ENCODE measurements at regions of chr11 and their contacts with region 1.

Region 1: DNA sequence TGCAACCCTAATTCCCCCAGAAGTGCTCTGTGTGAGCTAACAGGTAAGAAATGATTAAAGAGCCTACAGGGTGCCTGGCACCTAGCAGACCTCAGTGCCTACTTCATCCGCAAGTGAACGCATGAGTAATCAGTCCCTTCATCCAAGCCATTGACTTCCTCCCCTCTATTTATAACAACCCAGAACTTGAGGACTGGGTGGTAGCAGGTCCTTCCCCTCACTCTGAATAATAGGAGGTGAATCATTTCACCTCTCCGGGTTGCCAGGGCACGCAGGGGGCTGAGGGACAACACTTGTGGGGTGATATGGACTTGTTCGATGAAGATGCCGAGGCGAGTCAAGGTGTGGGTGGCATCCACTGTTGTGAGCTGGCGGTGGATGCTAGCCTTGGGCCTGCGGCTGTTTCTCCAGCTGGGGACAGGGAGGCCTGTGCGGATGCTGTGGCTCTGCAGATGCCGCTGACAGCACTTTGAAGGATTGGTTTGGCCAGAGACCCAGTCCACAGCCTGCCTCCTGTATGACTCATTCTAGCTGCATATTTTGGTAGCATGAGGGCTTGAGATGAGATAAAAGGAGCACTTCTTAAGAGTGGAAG is 11.7 kb upstream of the SORL1-AS1 start:
- DNase-seq: peak; percentile 91
- H3K4me3 Mint-ChIP-seq: peak overlapping the region; percentile 70
- H3K27ac Mint-ChIP-seq: peak overlapping the region; percentile 99
- H3K4me1 Mint-ChIP-seq: peaks cover 94% of the 10 kb centered on the region
- H3K27me3 Mint-ChIP-seq: no peaks in the 10 kb centered on the region

Region 2: GRCh38 chr11:120564573-120565311 is 899.7 kb before region 1 on chr11:
- intact Hi-C with region 1: no loop called
- DNase-seq: peak; percentile 62
- H3K4me3 Mint-ChIP-seq: no peak overlapping the region
- H3K27ac Mint-ChIP-seq: peak overlapping the region; percentile 2
- H3K4me1 Mint-ChIP-seq: peaks cover 3% of the 10 kb centered on the region
- H3K27me3 Mint-ChIP-seq: peaks cover 45% of the 10 kb centered on the region

Region 3: DNA sequence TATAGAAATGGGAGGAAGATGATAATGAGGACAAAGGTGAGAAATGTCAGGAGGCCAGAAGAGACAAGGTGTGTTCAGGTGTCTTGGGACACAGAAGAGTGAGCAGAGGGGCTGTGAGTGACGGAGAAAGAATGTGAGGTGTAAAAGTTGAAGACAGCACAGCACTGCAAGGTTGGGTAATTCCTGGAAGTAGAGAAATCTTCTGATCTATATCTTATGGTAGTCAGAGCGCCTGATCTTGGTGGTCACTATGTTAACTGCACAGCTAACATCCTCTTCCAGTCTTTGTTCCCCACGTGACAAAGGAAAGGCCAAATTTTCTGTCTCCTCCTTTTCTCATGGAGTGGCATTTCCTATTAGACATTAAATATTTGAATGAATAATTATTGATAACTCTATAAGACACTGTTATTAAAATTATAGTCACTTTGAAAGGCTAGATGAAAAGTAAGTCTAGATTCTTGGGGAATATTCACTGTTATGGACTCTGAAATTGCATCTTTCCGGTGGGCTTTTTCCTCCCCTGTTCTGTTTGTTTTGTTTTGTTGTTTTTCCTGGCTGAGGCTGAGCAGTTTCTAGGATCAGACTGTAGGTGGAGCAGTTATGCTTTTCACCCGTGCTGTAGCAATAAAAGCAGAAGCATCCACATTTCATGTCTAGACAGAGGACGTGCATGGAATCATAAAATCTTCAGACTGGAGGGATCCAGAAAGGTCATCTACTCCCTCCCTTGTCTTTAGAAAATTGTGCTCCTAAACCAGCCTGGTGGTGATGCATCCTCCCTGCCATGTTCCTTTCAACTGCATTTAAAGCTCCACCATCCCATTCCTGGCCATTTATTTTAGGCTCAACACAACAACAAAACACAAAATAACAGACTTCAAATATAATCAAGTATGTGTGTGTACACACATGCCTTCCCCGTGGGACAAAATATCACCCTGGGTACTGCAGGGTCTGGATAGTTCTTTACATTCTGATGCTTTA is 145.3 kb before region 1 on chr11:
- intact Hi-C with region 1: loop called (anchors 5 kb)
- DNase-seq: peak; percentile 80
- H3K4me3 Mint-ChIP-seq: peak overlapping the region; percentile 0
- H3K27ac Mint-ChIP-seq: no peak overlapping the region
- H3K4me1 Mint-ChIP-seq: peaks cover 20% of the 10 kb centered on the region
- H3K27me3 Mint-ChIP-seq: no peaks in the 10 kb centered on the region

Region 4: DNA sequence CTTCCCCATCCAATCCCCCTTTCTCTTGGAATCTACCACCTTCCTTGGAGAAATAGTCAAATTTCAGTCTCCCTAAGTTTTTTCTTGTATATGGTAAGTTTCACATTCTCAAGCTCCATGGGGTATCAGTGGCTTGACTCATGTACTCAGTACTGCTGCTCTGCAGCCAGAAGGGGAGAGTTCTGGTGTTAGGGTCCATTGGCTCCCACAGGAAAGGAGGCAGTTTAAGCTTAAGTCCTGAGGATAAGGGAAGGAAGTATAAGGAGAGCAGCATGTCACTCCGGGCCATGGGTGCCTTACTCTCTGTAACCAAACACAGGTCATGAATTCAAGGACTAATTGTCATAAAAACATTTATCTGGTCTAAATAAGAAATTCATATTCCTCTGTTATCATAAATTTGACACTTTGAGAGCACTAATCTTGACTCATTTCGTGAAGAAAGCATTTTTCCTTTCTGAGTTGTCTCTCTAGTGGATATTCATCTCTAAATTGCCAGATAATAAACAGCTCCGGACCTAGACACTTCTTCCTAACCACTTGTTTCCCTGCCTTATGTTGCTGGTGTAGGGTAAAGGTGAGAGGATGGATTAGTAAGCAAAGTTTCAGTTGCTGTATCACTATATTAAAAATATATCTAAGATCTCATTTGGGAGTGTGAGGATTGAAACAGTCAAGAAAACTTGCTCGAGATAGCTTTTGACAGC is 32.5 kb before region 1 on chr11:
- intact Hi-C with region 1: loop called (anchors 1 kb)
- DNase-seq: no peak
- H3K4me3 Mint-ChIP-seq: no peak overlapping the region
- H3K27ac Mint-ChIP-seq: peak overlapping the region; percentile 63
- H3K4me1 Mint-ChIP-seq: peaks cover 18% of the 10 kb centered on the region
- H3K27me3 Mint-ChIP-seq: peaks cover 2% of the 10 kb centered on the region

Region 5: DNA sequence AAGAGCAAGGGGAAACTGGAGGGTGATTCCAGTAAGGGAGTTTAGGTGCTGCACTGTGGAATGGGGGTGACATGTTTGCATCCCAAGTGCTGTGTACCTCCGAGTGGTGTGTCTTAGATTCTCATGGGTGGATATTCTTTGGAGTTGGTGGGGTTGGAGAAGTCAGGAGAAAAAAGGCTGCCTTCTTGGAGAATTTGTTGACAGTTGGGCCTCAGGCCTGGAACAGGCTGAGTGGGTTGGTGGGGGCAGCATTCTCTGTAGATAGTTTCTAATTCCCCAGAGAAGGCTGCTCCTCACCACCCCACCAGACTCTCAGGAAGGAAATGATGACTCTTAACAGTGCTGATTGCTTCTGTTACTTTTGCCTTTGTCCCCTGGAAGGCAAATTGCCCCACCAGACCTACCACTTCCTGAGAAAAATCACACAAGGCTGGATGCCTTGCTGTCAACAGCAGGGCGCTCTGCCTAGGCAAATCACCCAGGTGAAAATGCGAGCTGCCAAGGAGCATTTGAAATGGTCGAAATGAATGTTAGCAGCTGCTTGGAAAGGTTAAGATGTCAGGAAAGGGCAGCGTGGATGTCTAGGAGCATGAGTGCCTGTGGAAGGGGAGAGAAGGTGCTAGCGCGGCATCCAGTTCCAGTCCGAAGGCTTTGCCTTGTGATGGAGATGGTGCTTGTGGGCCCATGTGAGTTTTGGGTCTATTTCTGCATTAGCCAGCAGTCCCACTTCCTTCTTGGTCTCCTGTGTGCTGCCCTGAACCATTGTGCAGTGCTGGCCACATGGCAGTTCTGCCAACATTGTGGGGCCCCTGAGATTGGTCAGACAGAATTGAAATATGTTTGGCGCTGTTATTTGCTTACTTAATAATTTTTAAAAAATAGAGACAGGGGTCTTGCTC is 18.0 kb after region 1 on chr11:
- intact Hi-C with region 1: loop called (anchors 1 kb)
- DNase-seq: peak; percentile 89
- H3K4me3 Mint-ChIP-seq: peak overlapping the region; percentile 77
- H3K27ac Mint-ChIP-seq: peak overlapping the region; percentile 92
- H3K4me1 Mint-ChIP-seq: peaks cover 45% of the 10 kb centered on the region
- H3K27me3 Mint-ChIP-seq: no peaks in the 10 kb centered on the region

Region 6: GRCh38 chr11:121591405-121592033 is 127.1 kb after region 1 on chr11:
- intact Hi-C with region 1: loop called (anchors 5 kb)
- DNase-seq: peak; percentile 93
- H3K4me3 Mint-ChIP-seq: no peak overlapping the region
- H3K27ac Mint-ChIP-seq: no peak overlapping the region
- H3K4me1 Mint-ChIP-seq: peaks cover 19% of the 10 kb centered on the region
- H3K27me3 Mint-ChIP-seq: no peaks in the 10 kb centered on the region